H1 (cell line): ENCODE measurements at regions of chr22 and their contacts with region 1.

Region 1: GRCh38 chr22:20087319-20088273 is 7.6 kb downstream of the DGCR8 start:
- DNase-seq: no peak
- H3K4me3 ChIP-seq: no peak overlapping the region
- H3K27ac ChIP-seq: no peak overlapping the region
- H3K4me1 ChIP-seq: peaks cover 1 to 8% (median 3%) of the 10 kb centered on the region in 4 experiments; a peak in 3 of 7 replicates
- H3K27me3 ChIP-seq: no peaks in the 10 kb centered on the region
- CTCF ChIP-seq: no peak
- EP300 ChIP-seq: no peak
- POLR2A ChIP-seq: no peak
- RAD21 ChIP-seq: no peak

Region 2: DNA sequence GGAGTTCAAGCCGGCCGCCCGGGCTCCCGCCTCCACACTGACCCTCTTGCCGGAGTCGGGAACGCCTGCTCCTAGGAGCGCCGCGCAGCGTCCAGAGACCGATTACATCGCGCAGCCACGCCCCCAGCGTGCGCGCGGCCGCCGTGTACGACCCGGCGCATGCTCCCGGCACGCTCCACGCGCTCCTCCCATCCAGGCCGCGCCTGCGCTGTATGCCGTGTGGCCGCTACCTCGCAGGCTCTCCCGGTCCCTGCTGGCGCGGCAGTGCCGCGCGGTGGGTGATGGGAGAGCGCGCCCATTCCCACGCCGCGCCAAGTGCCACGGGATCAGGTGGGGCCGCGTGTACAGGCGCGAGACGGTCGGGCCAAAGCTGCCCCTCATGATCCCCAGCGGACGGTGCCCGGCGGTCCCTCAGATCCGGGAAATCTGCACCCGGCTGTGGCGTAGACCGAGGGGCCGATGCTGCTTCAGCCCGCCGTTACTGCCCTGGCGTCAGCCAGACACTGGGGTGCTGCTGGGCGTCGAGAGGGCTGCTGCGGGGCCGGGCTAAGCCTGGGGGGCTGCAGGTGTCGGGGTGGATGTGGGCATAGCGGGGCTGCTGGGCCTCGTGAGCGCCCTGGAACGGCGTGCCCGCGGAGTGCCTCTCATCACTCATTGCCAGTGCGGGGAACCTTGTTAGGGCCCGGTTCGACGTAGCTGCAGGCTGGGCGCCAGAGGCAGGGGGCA is 232.7 kb before region 1 on chr22 and contains the starts of genes GNB1L and RTL10:
- CTCF ChIA-PET with region 1: no interaction called
- POLR2A ChIA-PET with region 1: no interaction called
- DNase-seq: peak; percentile 70 to 94
- H3K4me3 ChIP-seq: peak within 1 kb of the TSS; percentile 75 to 92 (median 87)
- H3K27ac ChIP-seq: peak within 1 kb of the TSS; percentile 80
- H3K4me1 ChIP-seq: peaks cover 0 to 24% (median 12%) of the 10 kb centered on the region in 4 experiments; a peak in 6 of 7 replicates
- H3K27me3 ChIP-seq: no peaks in the 10 kb centered on the region
- CTCF ChIP-seq: peak in 1 of 3 experiments; percentile 14; a peak in 1 of 4 replicates
- EP300 ChIP-seq: no peak
- POLR2A ChIP-seq: peak; percentile 96 to 97
- RAD21 ChIP-seq: peak; percentile 20 to 26; a peak in 2 of 4 replicates
- total RNA-seq, gene GNB1L: 14.3 and 15.6 TPM in 2 replicates
- total RNA-seq, gene RTL10: 16.1 and 18.8 TPM in 2 replicates

Region 3: GRCh38 chr22:20102203-20102780 is 14.7 kb after region 1 on chr22:
- CTCF ChIA-PET with region 1: interaction called, 16 read pairs
- POLR2A ChIA-PET with region 1: interaction called, 598 read pairs
- DNase-seq: no peak
- H3K4me3 ChIP-seq: no peak overlapping the region
- H3K27ac ChIP-seq: no peak overlapping the region
- H3K4me1 ChIP-seq: peaks cover 0 to 6% (median 0%) of the 10 kb centered on the region in 4 experiments; a peak in 3 of 7 replicates
- H3K27me3 ChIP-seq: no peaks in the 10 kb centered on the region
- CTCF ChIP-seq: peak; percentile 30 to 45 (median 32)
- EP300 ChIP-seq: no peak
- POLR2A ChIP-seq: no peak
- RAD21 ChIP-seq: no peak

Region 4: DNA sequence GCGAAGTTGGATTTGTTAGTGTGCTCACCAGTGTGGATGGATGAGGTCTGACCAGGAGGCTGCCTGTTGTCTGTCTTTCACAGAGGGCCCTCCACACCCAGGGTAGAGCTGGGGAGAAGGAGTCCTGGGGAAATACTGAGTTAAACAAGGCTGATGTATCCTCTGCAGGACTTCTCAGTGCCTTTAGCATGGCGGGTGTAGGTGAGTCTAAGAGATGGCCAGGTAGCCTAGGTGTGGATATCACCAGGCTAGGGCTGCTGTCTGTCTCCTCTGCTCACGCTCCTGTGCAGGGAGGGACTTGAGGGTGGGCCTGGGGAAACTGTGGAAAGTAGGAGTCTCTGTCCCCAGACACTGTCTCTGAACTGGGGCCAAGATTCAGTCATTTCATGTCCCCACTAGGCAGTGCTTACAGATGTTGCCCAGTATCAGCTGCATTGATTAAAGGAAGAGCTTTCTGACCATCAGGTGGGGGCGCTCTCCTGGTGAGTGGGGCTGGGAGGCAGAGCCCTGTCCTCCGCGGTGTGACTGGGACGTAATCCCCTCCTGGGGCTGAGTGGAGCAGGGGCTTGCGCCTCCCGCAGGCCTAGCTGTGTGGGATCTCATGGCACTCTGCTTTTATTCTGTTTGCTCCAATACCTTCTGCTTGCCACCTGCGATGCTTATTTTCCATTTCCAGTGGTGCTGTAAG is 98.7 kb after region 1 on chr22:
- CTCF ChIA-PET with region 1: no interaction called
- POLR2A ChIA-PET with region 1: no interaction called
- DNase-seq: peak; percentile 61 to 69
- H3K4me3 ChIP-seq: no peak overlapping the region
- H3K27ac ChIP-seq: no peak overlapping the region
- H3K4me1 ChIP-seq: peaks cover 0 to 4% (median 2%) of the 10 kb centered on the region in 4 experiments; a peak in 2 of 7 replicates
- H3K27me3 ChIP-seq: no peaks in the 10 kb centered on the region
- CTCF ChIP-seq: peak; percentile 54 to 73 (median 64)
- EP300 ChIP-seq: no peak
- POLR2A ChIP-seq: no peak
- RAD21 ChIP-seq: peak; percentile 20 to 53